PC-3 (cell line): ENCODE measurements at regions of chr11 and their contacts with region 1.

Region 1: DNA sequence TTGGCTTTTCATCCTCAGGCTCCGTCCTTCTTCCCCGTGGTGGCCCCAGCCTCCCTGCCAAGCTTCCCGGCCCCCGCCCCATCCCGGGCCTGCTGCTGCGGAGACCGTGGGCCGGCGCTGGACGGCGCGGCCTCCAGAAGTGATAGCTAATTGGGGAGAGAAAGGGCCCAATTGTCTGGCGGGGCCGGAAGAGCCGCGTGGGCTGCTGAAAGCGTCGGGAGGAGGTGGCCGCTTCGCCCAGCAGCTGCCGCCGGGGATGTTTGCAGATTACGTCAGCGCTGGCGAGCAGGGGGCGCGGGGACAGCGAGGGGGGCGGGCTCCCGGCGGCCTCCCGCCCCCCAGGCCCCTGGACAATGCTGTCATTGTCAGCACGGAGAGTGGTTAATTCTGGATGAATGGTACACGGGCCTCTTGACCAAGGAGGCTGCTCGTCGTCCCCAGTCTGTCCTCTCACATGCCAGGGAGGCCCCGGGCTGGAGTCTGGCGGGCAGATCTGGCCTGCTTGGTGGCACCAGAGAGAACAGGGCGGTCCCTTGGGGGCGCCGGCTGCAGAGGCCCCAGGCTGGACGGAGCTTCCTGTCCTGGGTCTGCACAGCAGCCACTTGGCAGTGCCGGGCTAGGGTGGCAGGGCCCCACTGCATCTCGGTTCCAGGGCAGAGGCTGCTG is 1.6 kb downstream of the SMIM38 start:
- DNase-seq: no peak
- ATAC-seq: no peak
- H3K4me3 ChIP-seq: no peak overlapping the region
- H3K27ac ChIP-seq: no peak overlapping the region
- H3K4me1 ChIP-seq: no peaks in the 10 kb centered on the region
- H3K27me3 ChIP-seq: no peaks in the 10 kb centered on the region
- CTCF ChIP-seq: no peak

Region 2: GRCh38 chr11:69101115-69101791 is 56.0 kb before region 1 on chr11:
- CTCF ChIA-PET with region 1: no interaction called
- POLR2A ChIA-PET with region 1: no interaction called
- intact Hi-C with region 1: no loop called
- DNase-seq: peak; percentile 95
- ATAC-seq: peak; percentile 84
- H3K4me3 ChIP-seq: no peak overlapping the region
- H3K27ac ChIP-seq: no peak overlapping the region
- H3K4me1 ChIP-seq: peaks cover 17% of the 10 kb centered on the region
- H3K27me3 ChIP-seq: no peaks in the 10 kb centered on the region
- CTCF ChIP-seq: peak; percentile 98

Region 3: DNA sequence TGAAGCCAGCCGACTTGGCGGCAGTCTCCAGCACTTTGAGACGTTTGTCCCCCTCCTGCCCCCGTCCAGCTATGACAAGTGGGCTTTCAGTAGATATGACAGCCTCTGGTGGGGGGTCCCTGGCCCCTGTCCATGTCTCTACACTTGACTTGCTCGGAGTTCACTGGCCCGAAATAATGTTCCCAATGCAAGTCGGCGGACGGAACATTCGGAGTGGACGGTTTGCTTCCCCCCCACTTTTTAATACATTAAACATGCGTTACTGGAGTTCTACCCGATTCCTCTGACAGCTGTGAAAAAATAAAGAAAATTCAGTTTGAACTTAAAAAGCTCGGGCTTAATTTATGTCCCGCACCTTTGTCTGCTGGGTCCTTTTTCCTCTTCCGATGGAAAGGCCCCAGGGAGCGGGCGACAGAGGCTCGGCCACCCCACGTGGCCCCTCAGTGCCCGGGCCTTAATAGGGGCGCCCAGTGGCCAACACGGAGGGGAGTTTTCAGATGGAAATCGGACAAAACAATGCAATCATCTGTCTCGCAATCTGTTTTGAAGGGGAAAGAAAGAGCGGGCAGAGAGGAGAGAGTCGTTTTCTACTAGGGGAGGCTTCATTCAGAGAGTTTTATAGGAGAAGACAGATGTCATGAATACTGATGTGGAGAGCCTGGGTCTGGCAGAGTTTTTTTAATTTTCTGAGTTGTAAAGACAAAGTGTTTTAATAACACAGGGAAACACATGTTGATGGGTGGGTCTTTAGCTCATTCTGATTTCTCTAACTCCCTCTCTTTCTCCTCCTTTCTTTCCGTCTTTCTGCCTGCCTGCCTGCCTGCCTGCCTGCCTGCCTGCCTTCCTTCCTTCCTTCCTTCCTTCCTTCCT is 48.7 kb after region 1 on chr11:
- CTCF ChIA-PET with region 1: no interaction called
- POLR2A ChIA-PET with region 1: interaction called, 17 read pairs
- intact Hi-C with region 1: no loop called
- DNase-seq: no peak
- ATAC-seq: no peak
- H3K4me3 ChIP-seq: no peak overlapping the region
- H3K27ac ChIP-seq: no peak overlapping the region
- H3K4me1 ChIP-seq: no peaks in the 10 kb centered on the region
- H3K27me3 ChIP-seq: no peaks in the 10 kb centered on the region
- CTCF ChIP-seq: no peak

Region 4: GRCh38 chr11:70861559-70861958 is 1704.3 kb after region 1 on chr11:
- CTCF ChIA-PET with region 1: no interaction called
- POLR2A ChIA-PET with region 1: interaction called, 11 read pairs
- intact Hi-C with region 1: no loop called
- DNase-seq: no peak
- ATAC-seq: no peak
- H3K4me3 ChIP-seq: no peak overlapping the region
- H3K27ac ChIP-seq: no peak overlapping the region
- H3K4me1 ChIP-seq: no peaks in the 10 kb centered on the region
- H3K27me3 ChIP-seq: no peaks in the 10 kb centered on the region
- CTCF ChIP-seq: no peak